Posterior vena cava (tissue), 2 donors: ENCODE measurements at regions of chr13 and their contacts with region 1.

Region 1: DNA sequence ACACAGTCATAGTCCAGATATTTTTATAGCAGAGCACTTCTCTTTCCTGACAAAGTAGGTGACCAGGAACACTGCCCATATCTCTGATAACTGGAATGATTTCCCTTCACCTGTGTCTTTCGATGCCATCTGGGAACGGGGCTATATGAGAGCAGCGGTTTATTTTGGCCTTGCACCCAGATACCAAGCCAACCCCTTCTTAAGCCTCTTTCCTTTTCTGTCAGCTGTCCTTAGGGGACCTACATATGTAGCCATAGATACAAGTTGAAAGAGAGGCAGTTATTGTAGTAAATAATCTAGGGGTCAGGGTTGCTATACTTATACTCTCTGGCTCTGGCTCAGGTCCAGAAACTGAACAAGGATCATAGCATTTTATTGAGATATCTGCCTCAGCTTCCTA is 128.8 kb downstream of the NHLRC3 start:
- DNase-seq: no peak

Region 2: GRCh38 chr13:38826182-38826813 is 340.7 kb before region 1 on chr13:
- intact Hi-C with region 1: loop called in 1 of 2 experiments (anchors 5 kb)
- DNase-seq: no peak

Region 3: GRCh38 chr13:39226359-39226758 is 59.3 kb after region 1 on chr13:
- intact Hi-C with region 1: no loop called
- DNase-seq: no peak

Region 4: DNA sequence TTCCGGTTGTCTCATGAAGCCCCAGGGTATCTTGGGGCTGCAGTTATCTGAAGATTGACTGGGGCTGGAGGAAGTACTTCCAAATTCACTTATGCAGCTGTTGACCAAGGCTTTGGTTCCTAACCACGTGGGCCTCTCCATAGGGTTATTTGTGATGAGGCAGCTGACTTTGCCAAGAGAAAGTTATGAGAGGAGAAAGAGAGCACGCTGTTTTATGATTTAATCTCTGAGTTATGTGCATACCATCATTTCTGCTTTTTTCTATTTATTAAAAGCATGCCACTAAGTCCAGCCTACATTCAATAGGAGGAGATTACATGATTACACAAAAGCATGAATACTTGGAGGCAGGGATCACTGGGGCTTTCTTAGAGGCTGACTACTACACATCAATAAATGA is 86.8 kb after region 1 on chr13:
- intact Hi-C with region 1: no loop called
- DNase-seq: no peak